H1 (cell line): ENCODE measurements at regions of chr11 and their contacts with region 1.

Region 1: DNA sequence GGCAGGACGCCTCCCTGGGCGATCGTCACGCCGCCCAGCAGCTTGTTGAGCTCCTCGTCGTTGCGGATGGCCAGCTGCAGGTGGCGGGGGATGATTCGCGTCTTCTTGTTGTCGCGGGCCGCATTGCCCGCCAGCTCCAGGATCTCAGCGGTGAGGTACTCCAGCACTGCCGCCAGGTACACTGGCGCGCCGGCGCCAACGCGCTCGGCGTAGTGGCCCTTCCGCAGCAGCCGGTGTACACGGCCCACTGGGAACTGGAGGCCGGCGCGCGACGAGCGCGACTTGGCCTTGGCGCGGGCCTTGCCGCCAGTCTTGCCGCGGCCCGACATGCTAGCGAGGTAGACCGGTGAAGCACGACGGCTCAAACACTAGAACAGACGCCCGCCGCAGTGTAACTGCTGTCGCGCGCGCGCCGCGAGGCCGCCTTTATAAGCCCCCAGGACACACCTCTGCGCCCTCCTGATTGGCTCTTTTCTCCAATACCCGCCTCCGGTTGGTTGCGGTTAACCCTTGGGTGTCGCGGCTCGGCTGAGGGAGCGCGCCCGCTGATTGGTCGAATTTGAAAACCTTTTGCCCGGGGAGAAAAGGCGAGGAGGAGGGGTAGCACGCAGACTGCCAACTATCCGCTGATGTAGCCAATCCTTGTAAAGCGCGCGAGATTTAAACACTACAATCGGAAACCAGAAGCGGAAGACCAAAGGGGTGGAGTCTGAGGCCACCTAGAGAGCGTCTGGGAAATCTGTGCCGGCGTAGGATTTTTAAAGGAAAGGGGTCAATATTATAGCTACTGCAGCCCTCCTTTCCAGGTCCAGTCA is 6.4 kb downstream of the DPAGT1 start:
- DNase-seq: peak; percentile 99 to 100
- H3K4me3 ChIP-seq: peak overlapping the region; percentile 85 to 97 (median 92)
- H3K27ac ChIP-seq: peak overlapping the region; percentile 93
- H3K4me1 ChIP-seq: peaks cover 0 to 16% (median 3%) of the 10 kb centered on the region in 4 experiments; a peak in 5 of 7 replicates
- H3K27me3 ChIP-seq: no peaks in the 10 kb centered on the region
- CTCF ChIP-seq: no peak; a peak in 1 of 4 replicates
- EP300 ChIP-seq: no peak
- POLR2A ChIP-seq: peak; percentile 100
- RAD21 ChIP-seq: no peak

Region 2: DNA sequence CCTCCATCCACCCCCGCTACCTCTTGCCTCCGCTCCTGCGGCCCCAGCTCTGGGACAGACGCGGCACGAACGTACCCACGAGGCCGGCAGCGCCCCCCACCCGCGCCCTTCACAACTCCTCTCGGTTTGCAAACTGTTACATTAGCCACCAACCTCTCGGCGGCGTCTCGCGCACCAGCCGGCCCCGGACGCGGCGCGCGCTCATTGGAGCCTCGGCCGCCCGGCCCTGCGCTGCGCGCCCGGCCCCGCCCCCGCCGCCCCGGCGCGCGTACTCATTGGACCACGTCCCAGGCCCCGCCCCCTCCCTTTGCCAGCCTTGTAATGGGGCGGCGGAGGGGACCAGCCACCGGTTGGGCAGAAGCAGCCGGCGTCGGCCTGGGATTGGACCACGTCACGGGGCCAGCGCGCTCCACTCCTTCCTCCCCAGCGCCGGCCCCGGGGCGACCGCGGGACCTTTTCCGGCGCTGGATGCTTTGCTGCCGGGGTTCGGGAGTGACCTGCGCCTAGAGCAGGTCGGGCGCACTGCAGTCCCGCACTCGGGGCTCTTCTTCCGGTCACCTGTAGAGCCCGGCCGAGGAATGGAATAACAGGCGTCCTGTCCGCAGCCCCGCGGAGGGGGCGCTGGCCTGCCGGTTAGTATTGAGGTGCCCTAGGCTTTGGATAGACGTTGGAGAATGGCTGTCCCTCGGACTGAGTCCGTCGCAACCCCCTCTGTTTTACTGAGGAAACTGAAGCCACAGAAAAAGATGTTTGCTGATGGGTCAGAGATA is 38.1 kb before region 1 on chr11 and contains the start of gene HYOU1:
- CTCF ChIA-PET with region 1: interaction called, 3 read pairs
- POLR2A ChIA-PET with region 1: interaction called, 56 read pairs
- DNase-seq: peak; percentile 87 to 97
- H3K4me3 ChIP-seq: peak within 1 kb of the TSS; percentile 76 to 98 (median 89)
- H3K27ac ChIP-seq: peak within 1 kb of the TSS; percentile 82
- H3K4me1 ChIP-seq: peaks cover 0 to 8% (median 3%) of the 10 kb centered on the region in 4 experiments; a peak in 5 of 7 replicates
- H3K27me3 ChIP-seq: no peaks in the 10 kb centered on the region
- CTCF ChIP-seq: peak; percentile 28 to 42 (median 40)
- EP300 ChIP-seq: no peak
- POLR2A ChIP-seq: peak; percentile 42 to 66; a peak in 2 of 3 replicates
- RAD21 ChIP-seq: peak in 1 of 2 experiments; percentile 14; a peak in 1 of 4 replicates
- total RNA-seq, gene HYOU1: 293 and 295 TPM in 2 replicates

Region 3: GRCh38 chr11:119084663-119085436 is 10.4 kb before region 1 on chr11 and contains the start of gene HMBS:
- CTCF ChIA-PET with region 1: interaction called, 5 read pairs
- POLR2A ChIA-PET with region 1: interaction called, 141 read pairs
- DNase-seq: peak; percentile 75 to 97
- H3K4me3 ChIP-seq: peak within 1 kb of the TSS; percentile 78 to 97 (median 86)
- H3K27ac ChIP-seq: peak within 1 kb of the TSS; percentile 98
- H3K4me1 ChIP-seq: peaks cover 0 to 5% (median 2%) of the 10 kb centered on the region in 4 experiments; a peak in 2 of 7 replicates
- H3K27me3 ChIP-seq: no peaks in the 10 kb centered on the region
- CTCF ChIP-seq: no peak
- EP300 ChIP-seq: no peak
- POLR2A ChIP-seq: peak; percentile 68 to 95
- RAD21 ChIP-seq: no peak; a peak in 1 of 4 replicates
- total RNA-seq, gene HMBS: 65.5 and 69.3 TPM in 2 replicates

Region 4: GRCh38 chr11:119126675-119127268 is 31.5 kb after region 1 on chr11:
- CTCF ChIA-PET with region 1: interaction called, 3 read pairs
- POLR2A ChIA-PET with region 1: interaction called, 19 read pairs
- DNase-seq: no peak
- H3K4me3 ChIP-seq: no peak overlapping the region
- H3K27ac ChIP-seq: 0 out of 2 replicates have a peak overlapping the region, but pooled peaks have one; percentile 32
- H3K4me1 ChIP-seq: peaks cover 0 to 8% (median 6%) of the 10 kb centered on the region in 4 experiments; a peak in 5 of 7 replicates
- H3K27me3 ChIP-seq: no peaks in the 10 kb centered on the region
- CTCF ChIP-seq: no peak
- EP300 ChIP-seq: no peak
- POLR2A ChIP-seq: no peak
- RAD21 ChIP-seq: no peak

Region 5: GRCh38 chr11:119181677-119182412 is 86.6 kb after region 1 on chr11:
- CTCF ChIA-PET with region 1: no interaction called
- POLR2A ChIA-PET with region 1: interaction called, 11 read pairs
- DNase-seq: no peak
- H3K4me3 ChIP-seq: no peak overlapping the region
- H3K27ac ChIP-seq: no peak overlapping the region
- H3K4me1 ChIP-seq: no peaks in the 10 kb centered on the region; a peak in 1 of 7 replicates
- H3K27me3 ChIP-seq: no peaks in the 10 kb centered on the region
- CTCF ChIP-seq: no peak
- EP300 ChIP-seq: no peak
- POLR2A ChIP-seq: no peak
- RAD21 ChIP-seq: no peak

Region 6: GRCh38 chr11:119254239-119254638 is 159.0 kb after region 1 on chr11:
- CTCF ChIA-PET with region 1: no interaction called
- POLR2A ChIA-PET with region 1: no interaction called
- DNase-seq: no peak
- H3K4me3 ChIP-seq: no peak overlapping the region
- H3K27ac ChIP-seq: no peak overlapping the region
- H3K4me1 ChIP-seq: peaks cover 0 to 3% (median 0%) of the 10 kb centered on the region in 4 experiments; a peak in 3 of 7 replicates
- H3K27me3 ChIP-seq: no peaks in the 10 kb centered on the region
- CTCF ChIP-seq: no peak
- EP300 ChIP-seq: no peak
- POLR2A ChIP-seq: no peak
- RAD21 ChIP-seq: no peak